ENCODE measurements at regions of chr9 and their contacts with region 1.

Region 1: DNA sequence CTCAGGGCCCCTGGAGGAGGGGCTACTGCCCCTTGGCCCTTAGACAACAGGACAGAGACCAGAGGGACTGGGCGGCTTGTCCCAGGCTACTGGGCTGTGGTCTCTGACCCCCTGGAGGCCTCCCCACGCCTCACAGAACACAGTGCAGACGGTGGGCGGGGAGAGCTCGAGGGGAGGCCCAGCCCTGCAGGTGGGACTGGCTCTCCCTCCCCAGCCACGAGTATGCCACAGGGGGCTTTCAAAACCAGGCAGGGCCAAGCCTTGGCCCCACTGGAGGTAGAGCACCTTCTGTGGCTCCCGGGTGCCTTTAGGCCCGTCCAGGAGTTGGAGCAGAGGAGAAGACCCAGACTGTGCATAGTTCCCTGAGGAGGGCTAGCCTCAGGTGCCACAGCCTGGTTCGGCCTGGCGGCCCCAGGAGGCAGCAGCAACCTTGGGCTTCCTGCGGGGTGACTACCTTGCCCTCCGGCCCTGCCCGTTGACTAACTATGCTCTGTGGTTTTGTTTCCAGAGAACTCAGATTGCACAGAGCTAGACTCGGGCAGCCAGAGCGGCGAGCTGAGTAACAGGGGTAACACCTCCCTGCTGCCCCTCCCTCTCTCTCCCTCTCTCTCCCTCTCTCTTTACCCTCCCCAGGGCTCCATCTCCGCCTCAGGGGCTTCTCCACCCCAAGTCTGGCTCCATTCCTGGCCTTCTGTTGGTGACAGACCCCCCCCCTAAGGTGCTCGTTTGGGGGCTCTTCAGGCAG is 15.5 kb downstream of the CARD19 start:
- DNase-seq: no peak
- ATAC-seq: no peak
- H3K4me3 Mint-ChIP-seq: no peak overlapping the region
- H3K27ac Mint-ChIP-seq: no peak overlapping the region
- H3K4me1 Mint-ChIP-seq: peaks cover 30% of the 10 kb centered on the region
- H3K27me3 Mint-ChIP-seq: no peaks in the 10 kb centered on the region

Region 2: DNA sequence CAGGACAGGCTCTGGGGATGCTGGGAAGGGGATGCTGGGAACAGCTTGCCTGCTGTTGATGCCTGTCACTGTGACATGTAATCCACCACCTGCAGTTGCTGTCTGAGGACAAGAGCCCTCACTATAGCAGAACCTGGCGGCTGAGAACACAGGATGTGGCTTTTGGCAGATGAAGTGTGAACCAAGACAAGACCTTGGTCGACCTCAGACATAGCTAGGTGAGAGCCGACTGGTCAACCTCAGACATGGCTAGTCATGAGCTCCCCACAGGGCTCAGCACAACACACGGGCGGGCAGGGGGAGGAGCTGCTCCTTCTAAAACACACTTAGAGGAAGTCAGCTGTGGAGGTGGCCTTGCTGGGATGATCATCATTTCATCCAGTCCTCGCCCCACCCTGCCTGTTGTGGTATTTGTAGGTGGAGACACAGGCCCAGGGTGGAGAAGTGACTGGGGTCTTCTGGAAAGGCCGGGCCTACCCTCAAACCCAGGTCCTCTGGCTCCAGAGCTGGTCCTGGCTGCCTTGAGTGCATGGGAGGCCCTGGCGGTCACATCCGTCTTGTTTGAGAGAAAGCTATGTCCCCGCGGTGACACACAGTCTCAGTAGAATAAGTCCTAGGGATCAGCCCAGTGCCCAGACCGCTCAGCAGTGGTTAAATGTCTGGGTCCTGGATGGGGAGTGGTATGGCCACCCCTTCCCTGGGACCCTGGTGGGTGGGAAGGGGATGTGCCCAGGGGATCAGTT is 47.0 kb before region 1 on chr9:
- CTCF ChIA-PET with region 1: interaction called, 15 read pairs
- DNase-seq: peak; percentile 99
- ATAC-seq: peak; percentile 91
- H3K4me3 Mint-ChIP-seq: peak overlapping the region; percentile 71
- H3K27ac Mint-ChIP-seq: peak overlapping the region; percentile 98
- H3K4me1 Mint-ChIP-seq: peaks cover 77% of the 10 kb centered on the region
- H3K27me3 Mint-ChIP-seq: no peaks in the 10 kb centered on the region

Region 3: DNA sequence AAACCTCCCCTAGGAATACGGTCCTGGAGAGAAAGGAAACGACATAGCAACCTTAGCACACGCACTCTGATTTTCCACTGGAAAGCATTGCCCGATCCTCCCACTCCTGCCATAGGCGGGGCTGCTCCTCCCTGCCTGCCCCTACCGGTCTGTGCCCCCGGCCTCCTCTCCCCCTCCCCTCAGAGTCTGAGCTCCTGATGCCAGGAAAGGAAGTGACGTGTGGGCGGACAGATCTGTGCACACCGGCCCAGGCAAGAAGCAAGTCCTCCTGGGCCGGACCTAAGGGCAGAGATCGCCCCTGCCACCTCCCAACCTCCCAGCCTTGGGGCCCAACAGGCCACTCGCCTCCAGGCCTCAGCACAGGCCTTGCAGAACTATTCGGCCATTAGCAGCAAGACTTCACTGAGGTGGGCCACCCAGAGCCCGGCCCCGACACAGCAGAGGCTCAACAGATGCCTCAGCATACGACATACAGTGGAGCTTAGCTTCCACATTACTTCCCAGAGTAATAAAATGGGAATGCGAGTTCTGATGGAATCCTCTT is 15.4 kb after region 1 on chr9:
- CTCF ChIA-PET with region 1: interaction called, 45 read pairs
- DNase-seq: no peak
- ATAC-seq: no peak
- H3K4me3 Mint-ChIP-seq: no peak overlapping the region
- H3K27ac Mint-ChIP-seq: peak overlapping the region; percentile 90
- H3K4me1 Mint-ChIP-seq: peaks cover 58% of the 10 kb centered on the region
- H3K27me3 Mint-ChIP-seq: no peaks in the 10 kb centered on the region

Region 4: GRCh38 chr9:93143830-93144530 is 32.4 kb after region 1 on chr9:
- CTCF ChIA-PET with region 1: interaction called, 12 read pairs
- DNase-seq: peak; percentile 71
- ATAC-seq: peak; percentile 88
- H3K4me3 Mint-ChIP-seq: no peak overlapping the region
- H3K27ac Mint-ChIP-seq: peak overlapping the region; percentile 84
- H3K4me1 Mint-ChIP-seq: peaks cover 40% of the 10 kb centered on the region
- H3K27me3 Mint-ChIP-seq: no peaks in the 10 kb centered on the region

Measured in activated CD8-positive, alpha-beta memory T cell treated with anti-CD3 and anti-CD28 coated beads, Interleukin-2, amount 10 ng/mL, durations not matched to agents 7 days and 5 days (primary cell).